Aorta (tissue), 5 donors: ENCODE measurements at regions of chr5 and their contacts with region 1.

Region 1: GRCh38 chr5:167573370-167574127 is 717.9 kb upstream of the WWC1 start:
- DNase-seq: no peak
- ATAC-seq: peak; percentile 36
- H3K4me3 ChIP-seq: peak overlapping the region; percentile 34 to 41
- H3K27ac ChIP-seq: no peak overlapping the region
- H3K4me1 ChIP-seq: no peaks in the 10 kb centered on the region
- H3K27me3 ChIP-seq: peaks cover 0 to 2% of the 10 kb centered on the region in 2 donors

Region 2: DNA sequence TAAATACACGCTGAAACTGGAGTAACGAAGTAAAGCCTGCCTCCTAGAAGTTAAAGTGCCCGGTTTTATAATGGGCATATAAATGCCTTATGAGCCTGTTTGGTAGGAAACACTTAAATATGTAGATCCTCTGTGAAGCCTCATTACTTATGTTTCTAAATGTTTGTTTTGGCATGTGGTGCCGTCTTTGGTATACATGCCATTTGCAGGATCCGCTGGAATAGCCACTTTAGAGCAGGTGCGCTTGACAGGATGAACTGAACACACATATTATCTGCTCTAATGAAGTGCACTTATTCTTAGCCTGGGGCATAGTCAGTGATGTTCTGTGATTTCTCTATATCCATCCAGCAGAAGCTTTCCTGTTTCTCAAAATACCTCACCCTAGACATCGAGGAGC is 60.2 kb before region 1 on chr5:
- intact Hi-C with region 1: no loop called
- DNase-seq: no peak
- ATAC-seq: no peak
- H3K4me3 ChIP-seq: no peak overlapping the region
- H3K27ac ChIP-seq: no peak overlapping the region
- H3K4me1 ChIP-seq: no peaks in the 10 kb centered on the region
- H3K27me3 ChIP-seq: no peaks in the 10 kb centered on the region

Region 3: GRCh38 chr5:168020542-168021294 is 447.2 kb after region 1 on chr5:
- intact Hi-C with region 1: loop called (anchors 10 kb)
- DNase-seq: no peak
- ATAC-seq: no peak
- H3K4me3 ChIP-seq: no peak overlapping the region
- H3K27ac ChIP-seq: no peak overlapping the region
- H3K4me1 ChIP-seq: no peaks in the 10 kb centered on the region
- H3K27me3 ChIP-seq: no peaks in the 10 kb centered on the region